AG04449 (cell line): ENCODE measurements at regions of chr19 and their contacts with region 1.

Region 1: GRCh38 chr19:7355151-7355820 is 6.5 kb downstream of the ARHGEF18 start:
- DNase-seq: no peak
- H3K4me3 ChIP-seq: no peak overlapping the region
- CTCF ChIP-seq: no peak

Region 2: GRCh38 chr19:7098701-7099596 is 256.3 kb before region 1 on chr19:
- CTCF ChIA-PET with region 1: interaction called, 25 read pairs
- POLR2A ChIA-PET with region 1: no interaction called
- DNase-seq: peak; percentile 28
- H3K4me3 ChIP-seq: peak overlapping the region; percentile 81
- CTCF ChIP-seq: no peak

Region 3: DNA sequence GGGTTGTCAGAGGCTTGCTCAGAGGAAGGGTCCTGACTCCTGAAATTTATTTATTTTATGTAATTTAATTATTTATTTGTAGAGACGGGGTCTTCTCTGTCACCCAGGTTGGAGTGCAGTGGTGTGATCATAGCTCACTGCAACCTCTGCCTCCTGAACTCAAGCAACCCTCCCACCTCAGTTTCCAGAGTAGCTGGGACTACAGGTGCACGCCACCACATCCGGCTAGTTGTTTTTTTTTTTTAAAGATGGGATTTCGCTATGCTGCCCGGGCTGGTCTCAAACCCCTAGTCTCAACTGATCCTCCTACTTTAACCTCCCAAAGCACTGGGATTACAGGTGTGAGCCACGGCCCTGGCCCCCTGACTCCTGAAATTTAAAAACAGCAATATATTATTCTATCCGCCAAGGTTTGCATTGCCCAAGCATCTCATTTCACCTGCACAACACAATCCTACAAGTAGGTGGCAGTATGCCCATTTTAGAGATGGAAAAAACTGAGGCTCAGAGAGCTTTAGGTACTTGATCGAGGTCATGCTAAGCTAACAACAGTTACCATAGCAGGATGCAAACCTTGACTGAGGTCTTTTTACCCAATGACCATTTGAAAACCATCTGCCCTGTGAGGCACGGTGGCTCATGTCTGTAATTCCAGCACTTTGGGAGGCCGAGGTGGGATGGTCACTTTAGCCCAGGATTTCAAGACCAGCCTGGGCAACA is 11.6 kb after region 1 on chr19:
- CTCF ChIA-PET with region 1: interaction called, 42 read pairs
- POLR2A ChIA-PET with region 1: interaction called, 3 read pairs
- DNase-seq: no peak
- H3K4me3 ChIP-seq: no peak overlapping the region
- CTCF ChIP-seq: no peak

Region 4: GRCh38 chr19:7386308-7386707 is 31.0 kb after region 1 on chr19:
- CTCF ChIA-PET with region 1: interaction called, 92 read pairs
- POLR2A ChIA-PET with region 1: no interaction called
- DNase-seq: no peak
- H3K4me3 ChIP-seq: no peak overlapping the region
- CTCF ChIP-seq: no peak

Region 5: DNA sequence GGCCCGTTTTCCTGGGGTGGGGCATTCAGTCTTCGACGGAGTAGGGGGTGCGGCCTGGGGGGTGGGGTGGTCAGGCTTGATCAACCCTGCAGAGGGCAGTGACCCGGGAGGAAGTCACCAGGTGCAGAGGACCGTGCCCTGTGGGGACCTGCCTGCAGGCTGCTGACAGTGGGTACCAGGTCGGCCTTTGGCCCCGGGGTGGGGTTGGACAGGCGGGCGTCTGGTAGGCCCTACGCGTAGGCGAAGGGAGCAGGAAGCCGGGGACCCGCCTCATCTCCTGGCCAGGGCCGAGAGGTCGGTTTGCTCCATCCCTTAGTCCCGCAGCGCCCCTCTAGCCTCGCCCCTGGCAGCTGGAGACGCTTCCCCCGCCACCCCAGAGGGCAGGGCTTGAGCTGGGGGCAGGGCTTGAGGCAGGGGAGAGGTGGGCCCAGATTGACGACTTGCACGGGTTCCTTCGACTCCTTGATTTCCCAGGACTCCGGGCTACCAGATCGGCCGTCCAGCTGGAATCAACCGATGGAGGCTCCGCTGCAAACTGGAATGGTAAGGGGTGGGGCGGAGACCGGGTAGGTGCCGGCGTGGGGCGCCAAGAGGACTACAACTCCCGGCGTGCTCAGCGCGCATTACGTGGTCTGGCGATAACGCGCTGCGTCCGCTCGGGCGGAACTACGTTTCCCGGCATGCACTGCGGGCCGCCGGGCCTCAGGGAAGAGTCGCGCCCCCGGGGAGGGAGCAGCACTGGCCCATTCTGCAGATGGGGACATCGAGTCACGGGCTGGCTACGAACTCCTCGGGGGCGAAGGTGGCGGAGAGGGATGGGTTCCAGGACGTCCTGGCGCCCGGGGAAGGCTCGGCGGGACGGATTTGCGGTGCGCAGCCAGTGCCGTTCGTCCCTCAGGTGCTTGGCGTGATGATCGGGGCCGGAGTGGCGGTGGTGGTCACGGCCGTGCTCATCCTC is 180.0 kb after region 1 on chr19 and contains the start of gene PNPLA6:
- CTCF ChIA-PET with region 1: interaction called, 37 read pairs
- POLR2A ChIA-PET with region 1: interaction called, 4 read pairs
- DNase-seq: no peak
- H3K4me3 ChIP-seq: peak within 1 kb of the TSS; percentile 99
- CTCF ChIP-seq: no peak

Region 6: DNA sequence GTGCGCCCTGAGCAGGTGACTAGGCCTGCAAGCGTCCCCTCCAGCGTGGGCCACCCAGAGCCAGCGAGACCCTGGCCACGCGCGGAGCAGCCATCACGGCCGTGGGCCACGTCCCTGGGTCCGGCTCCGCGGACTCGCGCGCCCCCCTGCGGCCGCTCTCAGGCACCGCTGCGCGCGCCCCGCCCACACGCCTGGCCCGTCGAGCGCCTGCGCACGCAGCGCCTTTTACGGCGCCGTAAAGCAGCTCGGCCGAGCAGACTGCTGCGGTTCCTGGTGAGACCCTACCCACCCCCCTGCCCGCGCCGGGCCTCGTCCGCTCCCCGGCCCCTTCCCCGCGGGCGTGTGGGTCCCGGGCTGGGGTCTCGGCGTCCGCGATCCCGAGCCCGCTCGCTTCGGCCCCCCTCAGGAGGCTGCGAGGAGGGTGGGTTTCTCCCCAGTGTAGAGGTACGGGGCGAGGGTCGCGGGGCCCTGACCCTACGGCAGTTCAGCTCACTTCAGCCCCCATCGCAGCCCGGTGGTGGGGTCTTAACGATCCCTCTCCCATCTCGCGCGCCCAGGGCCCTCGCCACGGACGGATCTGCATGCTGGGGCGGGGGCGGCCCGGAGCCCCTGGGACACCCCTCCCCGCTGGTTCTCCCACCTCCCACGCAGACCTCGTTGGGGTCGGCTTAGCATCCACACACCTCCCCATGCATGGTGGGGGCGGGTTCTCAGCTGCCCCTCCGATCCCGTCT is 325.5 kb after region 1 on chr19 and contains the start of gene TRAPPC5:
- CTCF ChIA-PET with region 1: interaction called, 25 read pairs
- POLR2A ChIA-PET with region 1: no interaction called
- DNase-seq: no peak
- H3K4me3 ChIP-seq: peak within 1 kb of the TSS; percentile 95
- CTCF ChIP-seq: peak; percentile 67